PC-9 (cell line): ENCODE measurements at regions of chr14 and their contacts with region 1.

Region 1: DNA sequence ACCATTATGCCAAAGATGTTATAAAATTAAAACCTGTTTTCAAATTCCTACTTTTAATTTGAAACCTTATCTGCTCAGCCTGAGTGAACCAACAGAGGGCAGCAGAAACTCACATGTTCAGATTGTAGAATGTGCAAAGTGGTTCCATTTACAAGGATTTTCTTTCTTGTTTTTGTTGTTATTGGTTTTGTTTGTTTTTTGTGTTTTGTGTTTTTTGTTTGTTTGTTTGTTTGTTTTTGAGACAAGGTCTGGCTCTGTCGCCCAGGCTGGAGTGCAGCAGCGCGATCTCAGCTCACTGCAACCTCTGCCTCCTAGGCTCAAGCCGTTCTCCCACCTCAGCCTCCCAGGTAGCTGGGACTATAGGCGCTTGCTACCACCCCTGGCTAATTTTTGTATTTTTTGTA is 22.8 kb upstream of the GARIN2 start:
- DNase-seq: peak; percentile 44 to 51
- H3K4me3 ChIP-seq: no peak overlapping the region
- H3K27ac ChIP-seq: no peak overlapping the region
- H3K4me1 ChIP-seq: peaks cover 13% of the 10 kb centered on the region
- H3K27me3 ChIP-seq: no peaks in the 10 kb centered on the region
- CTCF ChIP-seq: peak; percentile 97

Region 2: GRCh38 chr14:66624299-66624937 is 542.0 kb before region 1 on chr14:
- CTCF ChIA-PET with region 1: interaction called, 3 read pairs
- POLR2A ChIA-PET with region 1: no interaction called
- intact Hi-C with region 1: loop called (anchors 5 kb)
- DNase-seq: peak in 1 of 2 experiments; percentile 53
- H3K4me3 ChIP-seq: no peak overlapping the region
- H3K27ac ChIP-seq: no peak overlapping the region
- H3K4me1 ChIP-seq: no peaks in the 10 kb centered on the region
- H3K27me3 ChIP-seq: no peaks in the 10 kb centered on the region
- CTCF ChIP-seq: peak; percentile 83

Region 3: GRCh38 chr14:66944872-66945271 is 221.6 kb before region 1 on chr14:
- CTCF ChIA-PET with region 1: no interaction called
- POLR2A ChIA-PET with region 1: no interaction called
- intact Hi-C with region 1: no loop called
- DNase-seq: no peak
- H3K4me3 ChIP-seq: no peak overlapping the region
- H3K27ac ChIP-seq: no peak overlapping the region
- H3K4me1 ChIP-seq: no peaks in the 10 kb centered on the region
- H3K27me3 ChIP-seq: no peaks in the 10 kb centered on the region
- CTCF ChIP-seq: no peak

Region 4: GRCh38 chr14:67187210-67187609 is 20.8 kb after region 1 on chr14:
- CTCF ChIA-PET with region 1: interaction called, 4 read pairs
- POLR2A ChIA-PET with region 1: interaction called, 3 read pairs
- intact Hi-C with region 1: loop called (anchors 1 kb)
- DNase-seq: peak; percentile 67 to 90
- H3K4me3 ChIP-seq: peak overlapping the region; percentile 30; the same call in 1 of the 2 replicates
- H3K27ac ChIP-seq: peak overlapping the region; percentile 73
- H3K4me1 ChIP-seq: peaks cover 44% of the 10 kb centered on the region
- H3K27me3 ChIP-seq: no peaks in the 10 kb centered on the region
- CTCF ChIP-seq: no peak

Region 5: DNA sequence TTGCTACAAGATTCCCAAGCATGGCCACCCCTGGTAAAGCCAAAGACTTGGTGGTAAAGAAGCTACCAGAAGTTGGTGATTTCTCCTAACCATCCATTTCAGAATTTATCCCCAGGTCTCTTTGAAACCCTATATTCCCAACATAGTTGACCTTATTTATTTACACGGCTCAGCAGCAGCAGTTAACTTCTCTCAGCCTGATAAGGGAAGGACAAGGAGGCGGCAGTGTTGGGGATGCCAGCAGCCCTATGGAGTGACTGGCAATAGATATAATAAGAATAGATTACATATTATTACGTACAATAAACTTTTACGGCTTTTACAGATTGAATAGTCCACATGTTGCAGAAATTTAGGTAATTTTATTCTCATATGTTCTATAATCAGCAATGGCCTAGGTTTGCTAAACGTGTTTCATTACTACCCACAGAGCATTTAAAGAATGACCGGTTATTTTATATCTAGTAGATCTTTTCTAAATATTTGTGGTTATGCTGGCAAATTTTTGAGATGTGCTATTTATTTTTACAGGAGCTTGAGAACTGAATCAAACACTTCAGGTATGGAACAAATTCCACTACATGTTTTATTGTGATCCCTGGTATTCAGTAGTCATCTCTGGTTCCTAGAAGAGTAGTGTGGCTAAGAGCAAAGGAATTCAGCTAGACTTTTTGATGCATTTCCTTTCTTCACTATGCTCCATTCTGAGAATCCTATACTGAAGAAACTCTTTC is 55.0 kb after region 1 on chr14:
- CTCF ChIA-PET with region 1: no interaction called
- POLR2A ChIA-PET with region 1: interaction called, 4 read pairs
- intact Hi-C with region 1: loop called (anchors 1 kb)
- DNase-seq: peak; percentile 24 to 97
- H3K4me3 ChIP-seq: no peak overlapping the region
- H3K27ac ChIP-seq: peak overlapping the region; percentile 33; the same call in 1 of the 2 replicates
- H3K4me1 ChIP-seq: peaks cover 24% of the 10 kb centered on the region
- H3K27me3 ChIP-seq: no peaks in the 10 kb centered on the region
- CTCF ChIP-seq: no peak

Region 6: GRCh38 chr14:67285876-67286452 is 119.5 kb after region 1 on chr14:
- CTCF ChIA-PET with region 1: interaction called, 16 read pairs
- POLR2A ChIA-PET with region 1: interaction called, 3 read pairs
- intact Hi-C with region 1: loop called (anchors 1 kb)
- DNase-seq: peak in 1 of 2 experiments; percentile 56
- H3K4me3 ChIP-seq: no peak overlapping the region
- H3K27ac ChIP-seq: no peak overlapping the region
- H3K4me1 ChIP-seq: no peaks in the 10 kb centered on the region
- H3K27me3 ChIP-seq: no peaks in the 10 kb centered on the region
- CTCF ChIP-seq: peak; percentile 89

Region 7: DNA sequence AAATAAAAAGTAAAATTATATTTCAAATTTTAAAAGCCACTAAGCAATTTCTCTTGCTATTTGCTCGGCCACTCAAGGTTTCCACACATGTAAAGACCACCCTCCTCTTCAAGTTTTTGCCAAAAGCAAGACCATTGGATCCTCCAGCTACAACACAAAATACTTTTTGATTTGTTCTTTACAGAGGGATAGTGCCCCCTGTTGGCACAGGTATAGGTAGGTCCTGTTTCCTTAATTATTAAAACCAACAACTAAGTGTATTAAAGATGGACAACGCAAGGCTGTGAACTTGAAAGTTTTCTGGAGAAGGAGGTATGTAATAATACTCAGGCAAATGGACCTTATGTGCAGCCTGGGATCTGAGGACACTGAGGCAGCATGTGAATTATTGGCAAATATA is 169.3 kb after region 1 on chr14:
- CTCF ChIA-PET with region 1: interaction called, 4 read pairs
- POLR2A ChIA-PET with region 1: no interaction called
- intact Hi-C with region 1: loop called (anchors 1 kb)
- DNase-seq: no peak
- H3K4me3 ChIP-seq: no peak overlapping the region
- H3K27ac ChIP-seq: no peak overlapping the region
- H3K4me1 ChIP-seq: no peaks in the 10 kb centered on the region
- H3K27me3 ChIP-seq: no peaks in the 10 kb centered on the region
- CTCF ChIP-seq: peak; percentile 83

Region 8: DNA sequence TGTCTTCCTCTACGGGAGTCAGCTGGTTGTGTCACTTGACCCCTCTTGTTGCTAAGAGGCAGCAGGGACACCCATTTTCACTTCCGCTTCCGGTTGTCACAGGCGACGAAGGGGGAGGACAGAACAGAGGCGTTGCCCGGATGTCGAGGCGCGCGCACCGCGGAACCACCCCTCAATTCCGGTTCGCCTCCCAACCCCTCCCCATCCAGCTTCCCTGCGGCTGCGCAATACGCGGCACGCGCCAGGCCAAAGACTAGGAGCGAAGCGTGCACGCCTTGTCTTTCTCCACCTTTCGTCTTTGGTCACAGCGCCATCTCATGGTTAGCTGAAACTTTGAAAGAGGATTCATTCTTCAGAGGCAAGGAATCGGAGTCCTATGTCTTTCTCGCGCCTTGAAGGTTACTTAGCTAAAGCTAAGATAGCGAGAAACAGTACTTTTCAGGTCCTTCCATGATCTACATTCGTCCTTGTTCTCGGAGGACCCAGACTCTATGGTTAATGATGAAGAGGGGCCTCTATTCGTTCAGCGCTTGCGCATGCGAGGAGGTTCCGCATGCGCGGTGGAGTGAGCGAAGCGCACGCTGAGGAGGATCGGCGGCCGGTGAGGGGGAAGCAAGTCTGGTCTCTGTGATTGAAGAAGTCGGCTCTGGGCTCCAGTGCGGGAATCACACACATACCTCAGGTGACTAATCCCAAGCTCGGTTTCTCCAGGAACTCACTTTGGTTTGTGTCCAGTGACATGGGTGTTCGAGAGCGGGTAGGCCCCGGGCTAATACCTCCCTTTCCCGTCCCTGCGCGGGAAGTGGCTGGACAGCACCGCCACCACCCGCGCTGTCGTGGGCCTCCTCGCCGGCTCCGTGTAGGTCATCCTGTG is 193.6 kb after region 1 on chr14 and contains the starts of genes ATP6V1D and EIF2S1:
- CTCF ChIA-PET with region 1: interaction called, 6 read pairs
- POLR2A ChIA-PET with region 1: no interaction called
- intact Hi-C with region 1: loop called (anchors 1 kb)
- DNase-seq: peak; percentile 97 to 100
- H3K4me3 ChIP-seq: peak within 1 kb of the TSS; percentile 75
- H3K27ac ChIP-seq: peak within 1 kb of the TSS; percentile 71
- H3K4me1 ChIP-seq: peaks cover 44% of the 10 kb centered on the region
- H3K27me3 ChIP-seq: no peaks in the 10 kb centered on the region
- CTCF ChIP-seq: peak; percentile 100
- total RNA-seq, gene ATP6V1D: 62.7 and 67.9 TPM in 2 replicates
- total RNA-seq, gene EIF2S1: 144 and 146 TPM in 2 replicates